HAP-1 (cell line): ENCODE measurements at regions of chr4 and their contacts with region 1.

Region 1: DNA sequence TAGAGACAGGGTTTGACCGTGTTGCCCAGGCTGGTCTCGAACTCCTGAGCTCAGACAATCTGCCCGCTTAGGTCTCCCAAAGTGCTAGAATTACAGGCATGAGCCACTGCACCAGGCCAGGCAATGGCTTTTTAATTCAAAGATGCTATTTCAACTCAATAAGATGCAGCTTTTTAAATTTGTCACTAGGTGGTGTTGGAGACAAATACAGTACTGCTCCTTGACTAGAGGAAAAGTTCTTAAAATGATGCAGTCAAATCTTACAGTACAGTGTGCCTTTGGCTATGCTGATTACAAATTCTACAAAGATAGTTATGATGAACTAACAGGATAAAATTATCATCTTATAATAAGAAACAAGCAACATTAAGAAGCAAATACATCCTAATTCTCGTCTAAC is 441.1 kb downstream of the KCNIP4 start:
- DNase-seq: no peak
- H3K4me3 ChIP-seq: no peak overlapping the region
- H3K4me1 ChIP-seq: no peaks in the 10 kb centered on the region
- H3K27me3 ChIP-seq: no peaks in the 10 kb centered on the region

Region 2: DNA sequence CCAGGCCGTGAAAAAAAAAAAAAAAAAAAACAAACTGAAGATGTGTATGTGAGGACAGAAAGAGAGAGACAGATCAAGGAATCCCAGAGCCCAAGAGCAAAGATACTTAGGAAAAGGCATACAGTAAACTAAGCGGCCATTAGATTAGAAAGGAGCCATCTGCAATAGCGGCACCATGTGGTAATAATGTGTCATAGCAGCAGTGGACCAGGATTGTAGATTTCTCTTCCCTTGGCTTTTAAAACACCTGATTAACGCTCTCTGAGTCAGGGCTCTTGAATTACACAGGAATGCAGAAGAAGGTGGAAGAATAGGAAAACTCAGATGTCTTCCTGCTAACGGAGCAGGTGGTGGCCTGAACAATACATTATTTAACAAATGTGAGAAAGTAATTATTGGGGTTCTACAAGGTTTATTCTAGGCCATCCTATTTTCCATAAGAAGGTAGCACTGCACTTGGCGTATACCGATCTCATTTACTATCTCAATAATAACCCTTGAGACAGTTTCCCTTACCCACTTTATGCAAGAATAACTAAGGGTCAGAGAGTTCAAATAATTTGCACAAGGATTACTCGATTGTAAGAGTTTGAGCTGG is 258.5 kb after region 1 on chr4:
- in situ Hi-C with region 1: loop called (anchors 5 kb)
- DNase-seq: peak; percentile 28 to 56
- H3K4me3 ChIP-seq: no peak overlapping the region
- H3K4me1 ChIP-seq: peaks cover 8% of the 10 kb centered on the region
- H3K27me3 ChIP-seq: no peaks in the 10 kb centered on the region; the same call in none of the 2 replicates